AG04450 (cell line): ENCODE measurements at regions of chr10 and their contacts with region 1.

Region 1: GRCh38 chr10:93376372-93377293 is 105.5 kb downstream of the MYOF start:
- DNase-seq: peak; percentile 74
- H3K4me3 ChIP-seq: peak overlapping the region; percentile 12; the same call in 1 of the 2 replicates
- H3K27ac ChIP-seq: peak overlapping the region; percentile 77
- H3K27me3 ChIP-seq: no peaks in the 10 kb centered on the region
- CTCF ChIP-seq: peak; percentile 96

Region 2: DNA sequence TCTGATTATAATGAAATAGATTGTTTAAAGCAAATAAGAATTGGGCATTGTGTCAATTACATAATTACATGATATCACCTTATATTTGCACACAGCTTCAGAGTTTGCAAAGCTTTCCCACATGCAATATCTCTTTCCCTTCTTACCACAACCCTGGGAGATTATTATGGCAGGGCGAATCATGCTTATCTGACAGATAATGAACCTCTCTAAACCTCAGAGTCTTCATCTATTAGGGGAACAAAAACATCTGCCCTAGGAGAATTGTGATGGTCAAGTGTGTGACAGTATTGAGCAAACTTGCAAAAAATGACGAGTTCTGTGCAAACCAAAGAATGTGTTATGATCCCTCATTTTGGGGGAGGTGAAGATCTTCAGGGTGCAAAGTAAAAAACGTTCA is 15.5 kb after region 1 on chr10:
- CTCF ChIA-PET with region 1: interaction called, 26 read pairs
- POLR2A ChIA-PET with region 1: no interaction called
- DNase-seq: no peak
- H3K4me3 ChIP-seq: no peak overlapping the region
- H3K27ac ChIP-seq: no peak overlapping the region
- H3K27me3 ChIP-seq: no peaks in the 10 kb centered on the region
- CTCF ChIP-seq: no peak

Region 3: DNA sequence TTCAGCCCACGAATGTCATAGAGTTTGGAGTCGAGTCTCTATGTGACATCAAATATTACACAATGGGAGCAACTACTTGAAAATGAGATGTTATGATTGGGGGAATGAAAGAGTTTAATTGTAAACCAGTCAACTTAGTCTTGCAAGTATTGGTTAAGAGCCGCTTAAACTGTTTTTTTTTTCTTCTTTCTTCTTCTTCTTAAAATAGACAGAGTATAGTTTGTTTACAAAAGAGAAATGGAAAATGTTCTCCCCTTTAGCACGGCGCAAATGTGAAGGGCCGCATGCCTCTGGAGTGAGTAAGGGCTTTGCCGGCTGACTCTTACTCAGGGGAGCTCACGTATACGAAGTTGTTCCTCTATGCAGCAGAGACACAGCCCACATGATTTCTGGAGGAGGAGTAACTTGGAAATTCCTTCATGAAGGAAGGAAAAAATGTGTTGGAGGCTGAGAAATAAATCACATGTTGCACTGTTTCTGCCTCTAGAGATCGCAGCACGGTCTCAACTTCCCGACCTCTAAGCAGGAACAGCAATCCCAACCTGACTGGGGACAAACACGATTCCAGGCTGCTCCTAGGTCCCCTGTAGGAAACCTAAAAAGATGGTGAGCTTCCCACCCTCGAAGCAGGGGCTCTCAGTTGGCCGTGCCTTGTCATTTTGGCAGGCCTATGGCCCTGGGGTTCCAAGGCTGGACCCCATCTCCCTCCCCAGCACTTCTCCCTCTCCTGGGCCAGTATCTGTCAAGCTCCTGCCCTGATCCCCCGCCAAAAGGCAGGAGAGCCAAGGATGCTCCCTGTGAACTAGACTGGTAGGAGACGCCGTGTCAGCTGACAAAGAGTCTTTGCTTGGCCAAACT is 60.7 kb after region 1 on chr10:
- CTCF ChIA-PET with region 1: interaction called, 26 read pairs
- POLR2A ChIA-PET with region 1: interaction called, 6 read pairs
- DNase-seq: peak; percentile 98
- H3K4me3 ChIP-seq: peak overlapping the region; percentile 45
- H3K27ac ChIP-seq: peak overlapping the region; percentile 100
- H3K27me3 ChIP-seq: no peaks in the 10 kb centered on the region
- CTCF ChIP-seq: no peak

Region 4: GRCh38 chr10:93471110-93471651 is 94.5 kb after region 1 on chr10:
- CTCF ChIA-PET with region 1: interaction called, 47 read pairs
- POLR2A ChIA-PET with region 1: interaction called, 17 read pairs
- DNase-seq: peak; percentile 88
- H3K4me3 ChIP-seq: no peak overlapping the region
- H3K27ac ChIP-seq: peak overlapping the region; percentile 99
- H3K27me3 ChIP-seq: no peaks in the 10 kb centered on the region
- CTCF ChIP-seq: no peak

Region 5: GRCh38 chr10:93503075-93503474 is 126.4 kb after region 1 on chr10:
- CTCF ChIA-PET with region 1: interaction called, 127 read pairs
- POLR2A ChIA-PET with region 1: no interaction called
- DNase-seq: no peak
- H3K4me3 ChIP-seq: no peak overlapping the region
- H3K27ac ChIP-seq: no peak overlapping the region
- H3K27me3 ChIP-seq: no peaks in the 10 kb centered on the region
- CTCF ChIP-seq: no peak

Region 6: GRCh38 chr10:93849593-93849992 is 473.0 kb after region 1 on chr10:
- CTCF ChIA-PET with region 1: no interaction called
- POLR2A ChIA-PET with region 1: no interaction called
- DNase-seq: no peak
- H3K4me3 ChIP-seq: no peak overlapping the region
- H3K27ac ChIP-seq: no peak overlapping the region
- H3K27me3 ChIP-seq: peaks cover 25% of the 10 kb centered on the region
- CTCF ChIP-seq: no peak